ENCODE measurements at regions of chr16 and their contacts with region 1.

Region 1: GRCh38 chr16:27109666-27110523 is 43.2 kb downstream of the C16orf82 start:
- DNase-seq: peak in 1 of 2 experiments; percentile 82
- H3K4me3 ChIP-seq: no peak overlapping the region
- H3K27ac ChIP-seq: no peak overlapping the region
- H3K4me1 ChIP-seq: no peaks in the 10 kb centered on the region
- H3K27me3 ChIP-seq: peaks cover 77% of the 10 kb centered on the region
- CTCF ChIP-seq: peak; percentile 76

Region 2: DNA sequence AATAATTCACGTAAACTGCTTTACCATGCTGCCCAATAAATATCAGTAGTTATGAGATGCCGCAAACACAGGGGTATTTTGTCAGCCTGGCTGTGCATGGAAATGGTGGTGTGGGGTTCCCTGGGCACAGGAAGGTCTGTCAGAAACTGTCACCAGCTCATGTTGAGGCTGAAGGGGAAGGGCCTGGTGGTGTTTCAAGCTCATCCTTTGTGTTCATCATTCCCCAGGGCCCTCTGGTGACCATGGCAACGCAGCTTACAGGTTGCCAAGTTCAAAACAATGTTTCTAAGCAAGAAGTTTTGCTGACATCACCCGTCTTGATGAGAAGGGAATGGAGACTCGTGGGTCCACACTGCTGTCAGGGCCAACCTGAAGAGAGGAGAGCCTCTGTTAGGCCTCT is 392.1 kb before region 1 on chr16:
- CTCF ChIA-PET with region 1: no interaction called
- POLR2A ChIA-PET with region 1: no interaction called
- intact Hi-C with region 1: no loop called
- DNase-seq: no peak
- H3K4me3 ChIP-seq: no peak overlapping the region
- H3K27ac ChIP-seq: no peak overlapping the region
- H3K4me1 ChIP-seq: no peaks in the 10 kb centered on the region
- H3K27me3 ChIP-seq: peaks cover 29% of the 10 kb centered on the region
- CTCF ChIP-seq: no peak

Region 3: GRCh38 chr16:26772503-26772902 is 337.4 kb before region 1 on chr16:
- CTCF ChIA-PET with region 1: interaction called, 10 read pairs
- POLR2A ChIA-PET with region 1: no interaction called
- intact Hi-C with region 1: no loop called
- DNase-seq: no peak
- H3K4me3 ChIP-seq: no peak overlapping the region
- H3K27ac ChIP-seq: no peak overlapping the region
- H3K4me1 ChIP-seq: no peaks in the 10 kb centered on the region
- H3K27me3 ChIP-seq: no peaks in the 10 kb centered on the region
- CTCF ChIP-seq: no peak

Region 4: DNA sequence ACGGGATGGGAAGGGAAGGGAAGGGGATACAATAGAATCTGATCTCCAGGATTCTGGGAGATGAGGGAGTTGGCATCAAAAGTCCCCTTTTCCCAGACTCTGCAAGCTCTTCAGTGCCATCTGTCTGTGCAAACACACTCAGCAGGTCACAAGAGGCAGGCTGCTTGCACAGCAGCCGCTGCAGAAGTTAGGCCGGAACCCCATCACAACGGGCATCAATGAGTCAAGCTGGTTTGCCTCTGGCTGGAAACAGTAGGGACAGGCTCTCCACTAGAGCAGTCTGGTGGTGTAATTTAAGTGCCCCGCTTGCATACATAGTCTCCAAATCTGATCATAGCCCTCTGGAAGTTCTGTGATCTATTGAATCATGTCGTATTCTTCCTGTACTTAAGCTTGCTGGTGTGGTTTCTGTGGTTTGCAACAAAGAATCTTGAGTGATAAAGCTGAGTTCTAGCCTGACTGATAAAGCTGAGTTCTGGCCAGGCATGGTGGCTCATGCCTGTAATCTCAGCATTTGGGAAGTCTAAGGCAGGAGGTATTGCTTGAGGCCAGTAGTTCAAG is 59.7 kb after region 1 on chr16:
- CTCF ChIA-PET with region 1: no interaction called
- POLR2A ChIA-PET with region 1: interaction called, 14 read pairs
- intact Hi-C with region 1: no loop called
- DNase-seq: peak; percentile 53 to 71
- H3K4me3 ChIP-seq: no peak overlapping the region
- H3K27ac ChIP-seq: no peak overlapping the region
- H3K4me1 ChIP-seq: 0 out of 2 replicates have a peak, but pooled peaks cover 4% of the 10 kb centered on the region
- H3K27me3 ChIP-seq: peaks cover 34% of the 10 kb centered on the region
- CTCF ChIP-seq: no peak; the same call in 1 of the 2 replicates

Region 5: GRCh38 chr16:27235055-27235937 is 125.4 kb after region 1 on chr16:
- CTCF ChIA-PET with region 1: interaction called, 19 read pairs
- POLR2A ChIA-PET with region 1: no interaction called
- intact Hi-C with region 1: no loop called
- DNase-seq: peak; percentile 58 to 88
- H3K4me3 ChIP-seq: no peak overlapping the region
- H3K27ac ChIP-seq: no peak overlapping the region
- H3K4me1 ChIP-seq: no peaks in the 10 kb centered on the region
- H3K27me3 ChIP-seq: no peaks in the 10 kb centered on the region
- CTCF ChIP-seq: peak; percentile 93

Region 6: DNA sequence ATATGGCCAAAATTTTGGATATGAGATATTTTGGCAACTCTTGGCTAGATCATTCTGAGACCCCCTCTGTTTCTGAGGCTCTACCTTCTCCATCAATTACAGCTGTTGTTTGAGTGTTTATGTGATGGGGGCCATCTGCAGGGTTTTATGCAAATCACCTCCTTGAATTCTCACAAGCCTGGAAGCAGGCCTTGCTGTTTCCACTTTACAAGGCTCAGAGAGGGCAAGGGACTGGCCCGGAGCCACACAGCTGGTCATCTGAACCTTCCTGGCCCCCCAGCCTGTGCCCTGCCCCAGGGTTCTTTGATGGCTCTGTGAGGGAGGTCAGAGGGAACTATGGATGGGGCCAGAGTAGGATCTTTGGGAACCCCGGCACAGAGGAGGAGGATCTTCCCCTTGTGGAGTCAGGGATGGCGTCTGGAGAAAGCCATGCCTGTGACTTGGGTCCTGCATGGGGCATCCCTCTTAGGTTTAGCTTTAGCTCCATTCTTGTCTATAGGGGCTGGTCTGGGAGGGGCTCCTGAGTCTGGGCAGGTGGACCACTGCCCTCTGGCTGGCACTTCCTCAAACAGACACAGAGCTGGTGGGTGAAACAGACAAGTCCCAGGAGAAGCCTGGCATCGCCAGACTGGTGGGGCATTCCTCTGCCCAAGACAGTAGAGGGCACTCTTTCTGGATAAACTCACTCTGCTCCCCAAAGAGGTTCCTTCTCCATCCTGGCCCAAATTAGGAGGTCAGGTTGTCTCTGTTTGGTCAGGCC is 318.3 kb after region 1 on chr16:
- CTCF ChIA-PET with region 1: interaction called, 10 read pairs
- POLR2A ChIA-PET with region 1: no interaction called
- intact Hi-C with region 1: no loop called
- DNase-seq: no peak
- H3K4me3 ChIP-seq: no peak overlapping the region
- H3K27ac ChIP-seq: no peak overlapping the region
- H3K4me1 ChIP-seq: no peaks in the 10 kb centered on the region
- H3K27me3 ChIP-seq: peaks cover 19% of the 10 kb centered on the region; the same call in 1 of the 2 replicates
- CTCF ChIP-seq: no peak; the same call in 1 of the 2 replicates